K562 (cell line): ENCODE measurements at regions of chr3 and their contacts with region 1.

Region 1: GRCh38 chr3:170307671-170308403 is 49.7 kb upstream of the SKIL start:
- DNase-seq: peak in 1 of 4 experiments; percentile 17
- ATAC-seq: peak; percentile 43; the same call in 2 of the 3 replicates
- H3K4me3 ChIP-seq: no peak overlapping the region
- H3K27ac ChIP-seq: no peak overlapping the region; the same call in 2 of the 3 replicates
- H3K4me1 ChIP-seq: peaks cover 0 to 5% of the 10 kb centered on the region in 2 experiments; a peak in 1 of 5 replicates
- H3K27me3 ChIP-seq: no peaks in the 10 kb centered on the region
- CTCF ChIP-seq: no peak
- EP300 ChIP-seq: no peak
- POLR2A ChIP-seq: no peak
- RAD21 ChIP-seq: no peak

Region 2: DNA sequence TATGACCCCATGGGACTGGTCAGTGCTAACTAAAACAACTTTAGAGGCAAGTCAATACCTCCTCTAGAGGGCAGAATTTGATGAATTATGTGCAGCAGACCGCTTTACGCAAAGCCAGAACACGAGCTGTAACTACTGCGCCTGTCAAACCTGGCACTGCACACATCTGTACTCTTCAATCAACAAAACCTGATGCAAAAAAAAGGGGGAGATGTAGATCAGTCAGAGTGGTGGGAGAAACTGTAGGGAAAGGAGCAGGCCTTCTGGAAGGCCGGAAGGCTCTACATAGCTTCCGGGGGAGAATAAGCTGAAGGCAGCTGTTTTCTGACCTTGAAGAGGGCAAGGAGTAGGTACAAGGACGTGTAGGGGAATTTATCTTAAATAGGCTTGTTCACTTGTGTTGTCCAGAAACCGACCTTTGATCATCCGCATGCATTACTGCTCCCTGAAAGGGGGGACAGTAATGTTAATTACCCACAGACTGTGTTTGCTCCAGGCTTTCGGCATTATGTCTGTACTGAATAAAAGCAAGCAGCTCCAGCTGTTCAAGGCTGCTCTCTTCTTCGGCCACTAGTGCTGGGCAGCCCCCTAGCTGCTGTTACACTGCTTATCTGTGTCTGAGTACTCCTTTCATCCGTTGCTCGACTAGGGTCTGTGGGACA is 229.1 kb before region 1 on chr3:
- CTCF ChIA-PET with region 1: no interaction called
- POLR2A ChIA-PET with region 1: no interaction called
- in situ Hi-C with region 1: no loop called
- intact Hi-C with region 1: loop called (anchors 10 kb)
- DNase-seq: peak in 1 of 4 experiments; percentile 35
- ATAC-seq: peak; percentile 87
- H3K4me3 ChIP-seq: no peak overlapping the region
- H3K27ac ChIP-seq: no peak overlapping the region
- H3K4me1 ChIP-seq: peaks cover 0 to 14% of the 10 kb centered on the region in 2 experiments; a peak in 4 of 5 replicates
- H3K27me3 ChIP-seq: no peaks in the 10 kb centered on the region
- CTCF ChIP-seq: peak; percentile 34 to 42 (median 36); a peak in 5 of 6 replicates
- EP300 ChIP-seq: no peak
- POLR2A ChIP-seq: no peak
- RAD21 ChIP-seq: peak in 1 of 2 experiments; percentile 52; a peak in 2 of 4 replicates

Region 3: GRCh38 chr3:170196833-170197232 is 111.0 kb before region 1 on chr3:
- CTCF ChIA-PET with region 1: no interaction called
- POLR2A ChIA-PET with region 1: no interaction called
- in situ Hi-C with region 1: no loop called
- intact Hi-C with region 1: no loop called
- DNase-seq: peak in 1 of 4 experiments; percentile 28
- ATAC-seq: peak; percentile 61
- H3K4me3 ChIP-seq: no peak overlapping the region
- H3K27ac ChIP-seq: no peak overlapping the region
- H3K4me1 ChIP-seq: peaks cover 0 to 2% of the 10 kb centered on the region in 2 experiments; a peak in 1 of 5 replicates
- H3K27me3 ChIP-seq: no peaks in the 10 kb centered on the region
- CTCF ChIP-seq: no peak
- EP300 ChIP-seq: no peak
- POLR2A ChIP-seq: no peak
- RAD21 ChIP-seq: no peak

Region 4: DNA sequence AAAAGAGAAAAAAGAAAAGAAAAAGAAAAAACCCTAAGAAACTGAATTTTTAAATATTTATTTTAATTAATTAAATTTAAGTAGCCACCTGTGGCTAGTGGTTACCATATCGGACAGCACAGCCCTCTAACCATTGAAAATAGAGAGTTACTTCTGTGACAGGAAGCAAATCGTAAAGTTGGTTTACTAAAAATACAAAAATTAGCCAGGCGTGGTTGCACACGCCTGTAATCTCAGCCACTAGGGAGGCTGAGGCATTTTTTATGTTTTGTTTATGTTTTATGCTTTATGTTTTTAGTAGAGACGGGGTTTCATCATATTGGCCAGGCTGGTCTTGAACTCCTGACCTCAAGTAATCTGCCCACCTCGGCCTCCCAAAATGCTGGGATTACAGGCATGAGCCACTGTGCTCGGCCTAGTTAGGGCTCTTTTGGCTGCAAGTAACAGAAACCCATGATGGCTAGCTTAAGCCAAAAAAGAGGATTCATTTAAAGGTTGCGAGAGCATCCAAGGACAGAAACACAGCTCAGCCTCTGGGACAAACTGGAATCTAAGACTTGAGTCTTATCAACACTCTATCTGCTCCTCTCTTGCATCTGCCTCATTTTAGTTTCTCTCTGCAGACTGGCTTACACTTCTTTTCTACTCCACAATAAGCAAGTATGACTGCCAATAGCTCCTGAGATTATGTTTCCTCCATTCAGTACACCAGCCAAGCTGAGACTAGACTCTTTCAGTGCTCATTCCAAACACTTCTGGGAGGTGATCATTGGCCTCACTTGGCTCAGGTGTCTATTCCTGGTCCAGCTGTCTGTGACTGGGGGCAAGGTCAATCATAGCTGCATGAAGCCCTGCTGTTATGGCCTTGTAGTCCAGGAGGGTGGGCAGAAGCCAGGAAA is 42.9 kb after region 1 on chr3:
- CTCF ChIA-PET with region 1: no interaction called
- POLR2A ChIA-PET with region 1: no interaction called
- in situ Hi-C with region 1: no loop called
- intact Hi-C with region 1: no loop called
- DNase-seq: no peak
- ATAC-seq: peak; percentile 25
- H3K4me3 ChIP-seq: no peak overlapping the region
- H3K27ac ChIP-seq: no peak overlapping the region
- H3K4me1 ChIP-seq: peaks cover 0 to 19% of the 10 kb centered on the region in 2 experiments; a peak in 4 of 5 replicates
- H3K27me3 ChIP-seq: no peaks in the 10 kb centered on the region
- CTCF ChIP-seq: no peak
- EP300 ChIP-seq: no peak
- POLR2A ChIP-seq: no peak
- RAD21 ChIP-seq: no peak